PC-9 (cell line): ENCODE measurements at regions of chr2 and their contacts with region 1.

Region 1: DNA sequence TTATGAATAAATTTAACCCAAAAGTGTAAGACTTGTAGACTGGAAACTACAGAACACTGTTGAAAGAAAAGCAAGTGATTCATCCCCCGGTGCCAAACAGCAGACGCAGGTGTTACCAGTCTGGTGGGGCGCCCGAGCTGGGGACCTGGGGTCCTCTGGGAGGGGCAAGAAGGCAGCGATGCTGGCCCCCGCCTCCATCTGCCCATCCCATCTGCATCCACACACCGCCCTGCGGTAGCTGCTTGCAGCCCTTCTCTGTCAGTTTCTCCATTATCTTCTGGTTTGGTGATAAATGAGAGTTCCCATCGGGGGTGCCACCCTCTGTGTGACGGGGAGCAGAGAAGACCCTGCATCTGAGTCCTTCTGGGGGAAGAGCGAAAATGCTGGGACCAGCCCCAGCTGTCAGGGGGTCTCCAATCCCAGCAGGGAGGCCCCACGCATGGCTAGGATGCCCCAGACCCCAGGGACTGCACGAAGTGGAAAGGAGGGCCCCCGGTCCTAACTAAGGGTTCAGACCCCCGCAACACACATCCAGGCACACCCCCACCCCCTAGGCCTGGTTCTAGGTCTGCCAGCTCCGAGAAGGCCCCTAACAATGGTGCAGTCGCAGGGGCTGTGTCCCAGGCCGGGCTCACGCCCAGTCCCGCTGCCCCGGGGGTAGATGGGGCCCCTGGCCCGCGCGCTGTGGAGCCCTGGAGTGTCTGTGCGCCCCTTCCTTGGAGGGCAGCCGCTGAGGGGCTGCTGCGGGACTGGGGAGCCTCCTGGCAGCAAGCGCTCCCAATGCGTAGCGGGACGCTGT is 686 bp upstream of the RGPD8 start:
- DNase-seq: no peak
- H3K4me3 ChIP-seq: no peak overlapping the region
- H3K27ac ChIP-seq: no peak overlapping the region
- H3K4me1 ChIP-seq: no peaks in the 10 kb centered on the region
- H3K27me3 ChIP-seq: no peaks in the 10 kb centered on the region
- CTCF ChIP-seq: no peak

Region 2: GRCh38 chr2:112254466-112255239 is 179.5 kb before region 1 on chr2 and contains the start of gene ZC3H8:
- CTCF ChIA-PET with region 1: interaction called, 15 read pairs
- POLR2A ChIA-PET with region 1: no interaction called
- intact Hi-C with region 1: loop called (anchors 10 kb)
- DNase-seq: peak; percentile 74 to 95
- H3K4me3 ChIP-seq: peak within 1 kb of the TSS; percentile 77
- H3K27ac ChIP-seq: peak within 1 kb of the TSS; percentile 53
- H3K4me1 ChIP-seq: 0 out of 2 replicates have a peak, but pooled peaks cover 5% of the 10 kb centered on the region
- H3K27me3 ChIP-seq: no peaks in the 10 kb centered on the region
- CTCF ChIP-seq: no peak
- total RNA-seq, gene ZC3H8: 8.6 and 11.3 TPM in 2 replicates

Region 3: DNA sequence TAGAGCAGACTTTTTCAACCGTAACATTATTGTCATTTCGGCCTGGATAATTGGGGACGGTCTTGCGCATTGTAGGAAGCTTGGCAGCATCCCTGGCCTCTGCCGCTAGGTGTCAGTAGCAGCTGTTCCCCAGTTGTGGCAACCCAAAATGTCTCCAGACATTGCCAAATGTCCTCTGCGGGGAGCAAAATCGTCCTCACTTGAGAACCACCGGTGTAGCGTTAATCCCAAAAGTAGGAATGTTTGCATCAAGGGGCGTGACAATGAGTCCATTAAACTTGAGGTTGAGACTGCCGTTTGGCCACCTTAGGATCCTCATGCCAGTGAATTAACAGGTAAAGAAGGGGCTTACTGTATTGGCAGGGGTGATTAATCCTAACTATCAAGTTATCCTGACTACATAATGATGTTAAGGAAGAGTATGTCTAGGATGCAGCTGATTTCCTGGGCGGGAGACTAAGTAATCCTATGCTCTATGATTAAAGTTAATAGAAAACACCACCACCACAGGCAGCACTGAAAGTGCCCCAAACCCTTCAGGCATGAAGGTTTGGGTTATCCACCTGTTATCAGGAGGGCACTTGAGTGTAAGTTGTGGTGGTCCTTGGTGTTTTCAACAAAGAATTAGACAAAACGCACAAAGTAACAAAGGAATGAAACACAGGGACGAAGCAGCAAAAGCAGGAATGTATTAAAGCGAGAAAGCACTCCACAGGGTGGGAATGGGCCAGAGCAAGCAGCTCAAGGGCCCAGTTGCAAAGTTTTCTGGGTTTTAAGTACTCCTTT is 174.4 kb before region 1 on chr2:
- CTCF ChIA-PET with region 1: interaction called, 15 read pairs
- POLR2A ChIA-PET with region 1: no interaction called
- intact Hi-C with region 1: loop called (anchors 10 kb)
- DNase-seq: peak; percentile 43 to 62
- H3K4me3 ChIP-seq: no peak overlapping the region
- H3K27ac ChIP-seq: no peak overlapping the region
- H3K4me1 ChIP-seq: no peaks in the 10 kb centered on the region
- H3K27me3 ChIP-seq: no peaks in the 10 kb centered on the region
- CTCF ChIP-seq: peak; percentile 87

Region 4: GRCh38 chr2:112821142-112821541 is 387.0 kb after region 1 on chr2:
- CTCF ChIA-PET with region 1: no interaction called
- POLR2A ChIA-PET with region 1: no interaction called
- intact Hi-C with region 1: no loop called
- DNase-seq: no peak
- H3K4me3 ChIP-seq: no peak overlapping the region
- H3K27ac ChIP-seq: no peak overlapping the region
- H3K4me1 ChIP-seq: peaks cover 6% of the 10 kb centered on the region; the same call in 1 of the 2 replicates
- H3K27me3 ChIP-seq: no peaks in the 10 kb centered on the region
- CTCF ChIP-seq: no peak